Ovary (tissue), 10 donors: ENCODE measurements at regions of chr5 and their contacts with region 1.

Region 1: DNA sequence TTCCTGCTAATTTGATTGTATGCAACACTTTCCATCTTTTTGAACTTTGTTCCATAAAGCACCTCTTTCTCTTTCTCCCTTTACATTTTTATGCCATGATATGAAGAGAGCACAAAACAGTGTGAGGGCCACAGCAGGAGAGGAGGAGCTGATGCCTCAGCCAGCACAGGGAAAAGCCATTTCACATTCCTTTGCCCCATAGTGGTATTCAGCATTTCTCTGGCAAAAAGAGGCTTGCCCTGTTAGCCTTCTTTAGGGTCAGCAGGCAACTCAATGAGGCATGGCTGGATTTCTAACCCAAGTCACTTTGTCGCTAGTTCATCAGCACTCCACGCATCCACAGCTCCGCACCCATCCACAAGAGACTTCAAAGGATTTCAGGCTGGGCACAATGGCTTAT is 23.1 kb upstream of the TRPC7 start:
- DNase-seq: no peak
- H3K4me3 ChIP-seq: no peak overlapping the region
- H3K27ac ChIP-seq: no peak overlapping the region
- H3K4me1 ChIP-seq: no peaks in the 10 kb centered on the region
- H3K27me3 ChIP-seq: no peaks in the 10 kb centered on the region
- CTCF ChIP-seq: no peak
- EP300 ChIP-seq: no peak
- POLR2A ChIP-seq: no peak

Region 2: DNA sequence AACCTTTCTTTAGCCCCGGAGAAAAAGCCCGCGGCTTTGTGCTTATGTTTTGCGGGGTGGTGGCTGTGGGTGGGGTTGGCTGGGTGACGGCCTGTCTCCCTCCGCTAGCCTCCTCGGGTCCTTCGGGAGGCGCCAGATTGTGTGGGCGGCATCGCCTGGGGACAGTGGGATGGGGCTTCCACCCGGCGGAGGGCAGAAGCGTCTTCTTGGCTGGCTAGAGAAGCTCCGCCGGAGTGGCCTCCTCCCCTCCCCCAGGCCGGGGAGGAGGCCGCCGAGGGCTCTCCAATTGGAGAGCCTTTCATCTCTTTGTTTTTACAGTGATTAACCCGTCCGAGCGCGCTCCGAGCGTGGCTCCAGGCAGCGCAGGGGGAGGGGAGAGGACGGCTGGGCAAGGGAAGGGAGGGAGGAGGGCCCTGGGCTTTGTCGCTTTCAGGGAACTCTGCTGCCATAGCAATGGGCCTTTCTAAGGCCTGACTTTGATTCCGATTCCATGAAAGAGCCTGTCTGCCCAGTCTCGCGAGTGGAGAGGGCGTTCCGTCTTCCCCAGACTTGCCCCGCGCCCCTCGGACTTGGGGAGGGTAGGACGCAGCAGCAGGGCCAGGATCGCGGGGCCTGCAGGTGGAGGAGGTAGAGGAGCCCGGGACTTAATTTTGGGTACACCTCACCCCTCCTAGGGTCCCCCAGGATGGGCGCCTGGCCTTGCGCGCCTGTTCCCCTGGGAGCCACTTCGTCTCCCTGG is 899.6 kb before region 1 on chr5:
- intact Hi-C with region 1: no loop called
- DNase-seq: no peak
- H3K4me3 ChIP-seq: no peak overlapping the region
- H3K27ac ChIP-seq: no peak overlapping the region
- H3K4me1 ChIP-seq: peaks cover 3% of the 10 kb centered on the region
- H3K27me3 ChIP-seq: no peaks in the 10 kb centered on the region
- CTCF ChIP-seq: no peak
- EP300 ChIP-seq: no peak
- POLR2A ChIP-seq: no peak

Region 3: DNA sequence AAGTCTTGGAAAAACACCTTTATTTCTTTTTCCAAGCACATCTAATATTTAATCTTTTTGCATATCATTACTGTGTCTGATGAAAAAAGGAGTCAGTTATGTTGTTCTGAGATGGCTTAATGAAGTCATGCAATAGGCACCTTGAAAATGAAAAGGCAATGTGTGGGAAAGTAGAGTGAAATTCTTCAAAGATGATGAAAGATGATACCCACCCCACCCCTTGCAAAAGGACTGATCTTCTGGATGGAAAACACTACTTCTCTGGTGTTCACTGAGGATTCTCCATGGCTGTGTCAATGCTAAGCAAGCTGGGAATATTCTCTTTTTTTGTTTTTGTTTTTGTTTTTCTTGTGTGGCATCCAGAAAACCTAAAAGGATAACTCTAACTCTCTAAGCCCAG is 24.7 kb after region 1 on chr5:
- intact Hi-C with region 1: loop called in 1 of 4 experiments (anchors 1 kb)
- DNase-seq: no peak
- H3K4me3 ChIP-seq: no peak overlapping the region
- H3K27ac ChIP-seq: no peak overlapping the region
- H3K4me1 ChIP-seq: no peaks in the 10 kb centered on the region
- H3K27me3 ChIP-seq: no peaks in the 10 kb centered on the region
- CTCF ChIP-seq: no peak
- EP300 ChIP-seq: no peak
- POLR2A ChIP-seq: no peak